Mammary epithelial cell (primary cell): ENCODE measurements at regions of chr4 and their contacts with region 1.

Region 1: GRCh38 chr4:8320386-8320750 is 50.8 kb downstream of the HTRA3 start:
- DNase-seq: no peak
- H3K4me3 ChIP-seq: no peak overlapping the region
- H3K27ac ChIP-seq: no peak overlapping the region
- H3K4me1 ChIP-seq: peaks cover 44% of the 10 kb centered on the region
- H3K27me3 ChIP-seq: no peaks in the 10 kb centered on the region
- CTCF ChIP-seq: peak; percentile 35 to 43

Region 2: GRCh38 chr4:8255698-8256441 is 64.5 kb before region 1 on chr4:
- CTCF ChIA-PET with region 1: no interaction called
- dilution Hi-C with region 1: loop called (anchors 5 kb)
- in situ Hi-C with region 1: no loop called
- intact Hi-C with region 1: no loop called
- DNase-seq: no peak
- H3K4me3 ChIP-seq: no peak overlapping the region
- H3K27ac ChIP-seq: no peak overlapping the region
- H3K4me1 ChIP-seq: peaks cover 9% of the 10 kb centered on the region
- H3K27me3 ChIP-seq: no peaks in the 10 kb centered on the region
- CTCF ChIP-seq: no peak

Region 3: GRCh38 chr4:8336412-8337075 is 16.2 kb after region 1 on chr4:
- CTCF ChIA-PET with region 1: no interaction called
- dilution Hi-C with region 1: no loop called
- in situ Hi-C with region 1: no loop called
- intact Hi-C with region 1: loop called (anchors 1 kb)
- DNase-seq: peak; percentile 95
- H3K4me3 ChIP-seq: peak overlapping the region in 2 of 3 experiments; percentile 25 to 43
- H3K27ac ChIP-seq: peak overlapping the region; percentile 75
- H3K4me1 ChIP-seq: peaks cover 34% of the 10 kb centered on the region
- H3K27me3 ChIP-seq: no peaks in the 10 kb centered on the region
- CTCF ChIP-seq: no peak

Region 4: DNA sequence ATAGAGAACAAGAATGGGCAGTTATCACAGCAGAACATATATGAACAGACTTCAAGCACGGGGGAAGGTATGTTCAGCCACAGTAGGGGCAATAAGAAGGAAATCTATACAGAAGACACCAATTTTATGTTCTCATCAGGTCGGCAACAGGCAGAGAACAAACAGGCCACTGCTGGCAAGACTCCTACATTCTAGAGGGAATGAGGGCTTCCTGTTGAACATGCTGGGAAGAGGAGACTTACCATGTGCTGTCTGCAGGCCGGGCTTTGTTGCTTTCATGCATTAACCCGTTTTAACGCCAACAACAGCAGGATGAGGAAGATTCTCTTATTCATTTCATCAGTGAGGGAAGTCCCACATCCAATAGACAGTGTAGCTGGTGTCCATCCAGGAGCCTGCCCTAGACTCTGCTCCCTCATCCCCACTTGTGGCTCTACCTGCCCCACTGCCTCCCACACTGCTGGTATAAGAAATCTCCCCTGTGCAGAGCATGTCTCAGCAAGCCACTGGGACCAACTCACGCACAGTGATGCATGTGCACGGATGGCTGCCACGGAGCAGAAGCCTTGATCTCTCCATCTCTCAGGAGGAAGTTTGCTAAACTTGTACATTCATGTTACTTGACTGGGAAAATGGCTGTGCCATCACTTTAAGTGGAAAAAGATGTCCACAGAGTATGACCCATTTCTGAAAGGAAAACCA is 35.6 kb after region 1 on chr4:
- CTCF ChIA-PET with region 1: no interaction called
- dilution Hi-C with region 1: no loop called
- in situ Hi-C with region 1: no loop called
- intact Hi-C with region 1: loop called (anchors 1 kb)
- DNase-seq: peak; percentile 47
- H3K4me3 ChIP-seq: no peak overlapping the region
- H3K27ac ChIP-seq: peak overlapping the region; percentile 36
- H3K4me1 ChIP-seq: peaks cover 36% of the 10 kb centered on the region
- H3K27me3 ChIP-seq: no peaks in the 10 kb centered on the region
- CTCF ChIP-seq: no peak

Region 5: DNA sequence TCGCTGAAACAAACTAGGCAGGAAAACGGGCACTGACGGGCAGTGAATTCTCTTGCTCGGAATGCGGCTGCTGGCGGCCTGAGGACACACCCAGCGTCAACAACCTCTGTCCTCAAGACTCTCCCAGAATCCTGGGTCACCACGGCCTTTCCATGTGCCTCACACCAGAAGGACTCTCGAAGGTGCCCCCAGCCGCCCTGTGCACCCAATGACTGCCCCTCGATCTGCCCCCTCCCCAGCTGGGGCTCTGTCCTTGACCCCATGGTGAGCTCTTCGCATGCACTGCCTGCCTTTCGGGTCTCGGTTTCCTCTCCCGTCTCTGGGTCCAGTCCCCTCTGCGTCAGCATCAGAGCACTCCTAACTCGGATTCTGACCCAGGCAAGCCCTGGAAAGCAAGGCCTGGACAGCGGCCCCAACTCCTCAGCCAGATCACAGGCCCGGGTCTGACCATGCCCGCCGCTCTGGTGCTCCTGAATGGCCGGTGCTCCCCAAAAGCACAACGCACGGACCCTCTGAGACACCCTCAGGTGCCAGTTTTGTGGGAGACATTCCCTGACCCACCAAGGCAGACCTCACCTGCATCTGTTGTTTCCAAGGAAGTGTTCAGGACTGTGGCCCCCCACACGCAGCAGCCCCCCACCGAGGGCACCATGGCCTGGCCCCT is 64.2 kb after region 1 on chr4:
- CTCF ChIA-PET with region 1: no interaction called
- dilution Hi-C with region 1: loop called (anchors 5 kb)
- in situ Hi-C with region 1: no loop called
- intact Hi-C with region 1: no loop called
- DNase-seq: no peak
- H3K4me3 ChIP-seq: no peak overlapping the region
- H3K27ac ChIP-seq: no peak overlapping the region
- H3K4me1 ChIP-seq: no peaks in the 10 kb centered on the region
- H3K27me3 ChIP-seq: no peaks in the 10 kb centered on the region
- CTCF ChIP-seq: no peak